Motor neuron (in vitro differentiated cells): ENCODE measurements at regions of chr11 and their contacts with region 1.

Region 1: DNA sequence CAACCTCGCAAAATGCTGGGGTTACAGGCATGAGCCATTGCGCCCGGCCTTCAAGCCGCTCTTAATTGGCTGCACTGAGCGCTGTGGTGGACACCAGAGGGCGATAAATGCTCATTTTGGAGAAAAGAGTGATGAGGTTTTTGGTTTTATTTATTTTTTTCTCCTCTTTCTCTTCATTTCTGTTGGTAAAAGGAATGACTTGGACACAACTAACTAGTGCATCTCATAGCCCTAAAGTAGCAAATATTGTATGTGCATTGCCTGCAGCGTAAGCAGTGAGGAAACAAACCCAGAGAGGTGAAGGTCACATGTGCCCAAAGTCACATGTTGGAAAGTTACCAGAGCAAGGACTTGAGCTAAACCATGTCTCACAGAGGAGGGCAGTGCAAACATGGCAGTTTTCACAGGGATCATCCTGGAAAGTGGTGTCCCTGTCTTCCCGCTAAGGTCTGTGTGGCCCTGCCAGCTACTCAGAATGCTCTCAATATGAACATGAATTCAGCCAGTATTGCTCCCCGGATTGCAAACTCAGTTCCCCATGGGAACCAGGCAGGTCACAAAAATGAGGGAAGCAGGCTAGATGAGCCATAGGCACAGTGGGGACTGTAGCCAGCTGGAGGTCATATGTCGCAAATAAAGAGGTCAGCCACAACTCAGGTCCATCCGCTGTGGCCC is 8.6 kb upstream of the CD82 start:
- ATAC-seq: peak; percentile 56 to 87 (median 74)
- H3K4me3 ChIP-seq: no peak overlapping the region
- H3K27ac ChIP-seq: no peak overlapping the region
- H3K4me1 ChIP-seq: no peaks in the 10 kb centered on the region

Region 2: GRCh38 chr11:44600839-44601383 is 44.0 kb after region 1 on chr11:
- in situ Hi-C with region 1: loop called in 1 of 9 experiments (anchors 10 kb)
- ATAC-seq: peak in 3 of 8 experiments; percentile 61 to 84 (median 73)
- H3K4me3 ChIP-seq: no peak overlapping the region
- H3K27ac ChIP-seq: no peak overlapping the region
- H3K4me1 ChIP-seq: peaks cover 0 to 6% of the 10 kb centered on the region in 2 donors

Region 3: GRCh38 chr11:44611687-44612434 is 55.0 kb after region 1 on chr11:
- in situ Hi-C with region 1: loop called in 2 of 9 experiments (anchors 10 kb)
- ATAC-seq: peak in 4 of 8 experiments; percentile 3 to 53 (median 8)
- H3K4me3 ChIP-seq: no peak overlapping the region
- H3K27ac ChIP-seq: no peak overlapping the region
- H3K4me1 ChIP-seq: peaks cover 0 to 3% of the 10 kb centered on the region in 2 donors

Region 4: GRCh38 chr11:44671234-44671633 is 114.4 kb after region 1 on chr11:
- in situ Hi-C with region 1: no loop called
- ATAC-seq: peak in 3 of 8 experiments; percentile 20 to 35 (median 33)
- H3K4me3 ChIP-seq: no peak overlapping the region
- H3K27ac ChIP-seq: no peak overlapping the region
- H3K4me1 ChIP-seq: no peaks in the 10 kb centered on the region